SK-N-SH (cell line): ENCODE measurements at regions of chr4 and their contacts with region 1.

Region 1: DNA sequence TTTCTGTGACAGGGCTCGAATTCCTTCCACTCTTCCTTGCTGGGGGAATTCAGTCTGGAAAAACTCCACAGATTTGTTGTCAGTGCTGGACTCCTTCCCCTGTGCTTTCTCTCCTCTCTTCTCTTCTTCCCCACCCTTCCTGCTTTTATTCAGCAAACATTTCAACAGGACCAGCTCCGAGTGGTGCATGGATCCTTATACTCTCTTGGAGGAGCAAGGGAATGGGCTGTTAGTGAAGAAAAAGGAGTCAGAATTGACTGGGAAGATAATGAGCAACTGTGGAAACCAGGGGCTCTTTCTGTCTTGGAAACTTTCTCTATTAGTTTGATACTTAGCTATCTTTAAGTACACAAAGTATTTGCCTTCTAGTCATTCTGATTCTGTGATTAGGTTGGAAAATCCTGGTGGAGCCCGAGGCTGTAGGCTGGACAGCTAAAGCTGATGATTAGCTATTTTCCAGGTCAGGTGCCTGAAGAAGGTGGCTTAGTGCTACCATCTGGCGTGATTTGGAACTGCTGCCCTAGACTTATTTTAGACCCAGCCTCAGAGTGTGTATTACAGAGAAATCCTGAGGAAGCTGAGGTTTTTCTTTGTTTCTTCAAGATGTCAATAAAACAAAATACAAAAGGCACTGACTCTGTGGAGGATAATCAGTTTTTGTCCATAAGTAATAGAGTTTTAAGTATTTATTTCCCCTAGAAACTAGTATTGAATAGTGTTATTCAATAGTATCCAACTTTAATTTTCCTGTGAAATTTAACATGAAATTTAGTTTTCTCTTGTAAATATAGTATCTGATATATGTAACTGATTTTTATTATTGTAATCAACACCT is 38.4 kb downstream of the NAP1L5 start:
- DNase-seq: peak; percentile 45
- H3K4me3 ChIP-seq: no peak overlapping the region
- H3K27ac ChIP-seq: peak overlapping the region in 1 of 2 experiments; percentile 99; a peak in 2 of 4 replicates
- H3K4me1 ChIP-seq: peaks cover 2 to 19% of the 10 kb centered on the region in 2 experiments
- H3K27me3 ChIP-seq: no peaks in the 10 kb centered on the region
- CTCF ChIP-seq: peak; percentile 79
- EP300 ChIP-seq: no peak
- RAD21 ChIP-seq: peak; percentile 85

Region 2: DNA sequence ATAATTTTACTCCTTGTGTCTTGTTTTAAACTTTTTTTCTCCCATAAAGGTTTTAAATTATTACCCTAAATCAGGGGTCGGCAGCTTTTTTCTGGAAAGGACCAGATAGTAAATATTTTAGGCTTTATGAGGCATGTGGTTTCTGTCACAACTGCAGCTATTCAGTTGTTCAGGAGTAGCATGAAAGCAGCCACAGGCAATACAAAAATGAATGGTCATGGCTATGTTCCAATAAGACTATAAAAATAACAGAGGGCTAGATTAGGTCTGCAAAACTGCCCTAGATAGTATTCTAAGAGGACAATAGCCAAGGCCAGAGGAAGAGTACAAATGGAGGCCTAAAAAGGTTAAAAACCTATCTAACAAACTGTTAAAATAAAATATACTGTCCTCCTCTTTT is 177.7 kb before region 1 on chr4:
- CTCF ChIA-PET with region 1: no interaction called
- POLR2A ChIA-PET with region 1: no interaction called
- DNase-seq: peak; percentile 22
- H3K4me3 ChIP-seq: no peak overlapping the region
- H3K27ac ChIP-seq: no peak overlapping the region
- H3K4me1 ChIP-seq: no peaks in the 10 kb centered on the region
- H3K27me3 ChIP-seq: no peaks in the 10 kb centered on the region; the same call in 1 of the 2 replicates
- CTCF ChIP-seq: no peak
- EP300 ChIP-seq: peak in 1 of 2 experiments; percentile 48; a peak in 1 of 4 replicates
- RAD21 ChIP-seq: no peak

Region 3: DNA sequence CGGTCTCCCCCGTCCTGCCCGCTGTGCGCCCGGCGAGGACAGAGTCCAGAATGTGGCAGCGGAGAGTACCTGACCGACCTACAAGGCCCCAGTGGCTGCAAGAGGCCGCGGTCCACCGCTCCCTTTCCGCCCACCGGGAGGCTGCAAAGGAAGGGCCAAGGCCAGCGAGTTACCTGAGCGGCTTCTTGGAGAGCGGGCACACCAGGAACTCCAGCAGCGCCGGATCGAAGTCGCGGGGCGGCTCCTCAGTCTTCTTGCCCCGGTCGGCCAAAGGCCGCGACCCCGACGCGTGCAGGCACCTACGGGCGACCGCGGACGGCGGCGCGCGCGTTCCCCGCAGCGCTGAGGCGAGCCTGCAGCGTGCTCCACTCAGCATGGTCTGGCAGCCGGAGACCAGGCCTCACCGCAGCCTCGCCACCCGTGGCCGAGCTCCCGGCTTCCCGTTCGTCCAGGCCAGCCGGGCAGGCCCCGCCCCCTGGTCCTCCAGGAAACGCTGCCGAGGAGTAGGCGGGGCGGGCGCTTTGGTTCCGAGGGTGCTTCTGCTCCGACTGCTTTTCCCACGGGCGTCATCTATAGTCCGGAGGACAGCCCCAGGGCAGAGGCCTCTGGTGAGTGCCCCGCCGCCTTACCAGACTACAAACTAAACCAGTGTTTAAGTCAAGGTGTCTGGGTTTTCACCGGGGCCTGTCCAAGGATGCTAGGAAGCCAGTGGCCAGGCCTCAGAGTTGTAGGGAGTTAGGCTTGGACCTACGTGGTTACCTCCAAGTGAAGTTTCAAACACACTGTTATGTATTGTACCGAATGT is 135.7 kb before region 1 on chr4 and contains the start of gene PYURF:
- CTCF ChIA-PET with region 1: interaction called, 26 read pairs
- POLR2A ChIA-PET with region 1: interaction called, 3 read pairs
- DNase-seq: peak; percentile 93
- H3K4me3 ChIP-seq: peak within 1 kb of the TSS; percentile 92 to 95
- H3K27ac ChIP-seq: peak within 1 kb of the TSS; percentile 89 to 97
- H3K4me1 ChIP-seq: peaks cover 0 to 13% of the 10 kb centered on the region in 2 experiments; a peak in 2 of 4 replicates
- H3K27me3 ChIP-seq: no peaks in the 10 kb centered on the region
- CTCF ChIP-seq: no peak
- EP300 ChIP-seq: peak in 1 of 2 experiments; percentile 30; a peak in 1 of 4 replicates
- RAD21 ChIP-seq: no peak
- polyA plus RNA-seq, gene PYURF: 52.0 and 63.2 TPM in 2 replicates

Region 4: GRCh38 chr4:88528861-88529260 is 130.4 kb before region 1 on chr4:
- CTCF ChIA-PET with region 1: interaction called, 26 read pairs
- POLR2A ChIA-PET with region 1: interaction called, 3 read pairs
- DNase-seq: no peak
- H3K4me3 ChIP-seq: no peak overlapping the region
- H3K27ac ChIP-seq: 0 out of 4 replicates have a peak overlapping the region, but pooled peaks of 1 of the 2 experiments have one; percentile 15
- H3K4me1 ChIP-seq: peaks cover 9 to 11% of the 10 kb centered on the region in 2 experiments; a peak in 3 of 4 replicates
- H3K27me3 ChIP-seq: no peaks in the 10 kb centered on the region
- CTCF ChIP-seq: peak; percentile 47
- EP300 ChIP-seq: no peak
- RAD21 ChIP-seq: peak; percentile 35; the same call in 1 of the 2 replicates

Region 5: DNA sequence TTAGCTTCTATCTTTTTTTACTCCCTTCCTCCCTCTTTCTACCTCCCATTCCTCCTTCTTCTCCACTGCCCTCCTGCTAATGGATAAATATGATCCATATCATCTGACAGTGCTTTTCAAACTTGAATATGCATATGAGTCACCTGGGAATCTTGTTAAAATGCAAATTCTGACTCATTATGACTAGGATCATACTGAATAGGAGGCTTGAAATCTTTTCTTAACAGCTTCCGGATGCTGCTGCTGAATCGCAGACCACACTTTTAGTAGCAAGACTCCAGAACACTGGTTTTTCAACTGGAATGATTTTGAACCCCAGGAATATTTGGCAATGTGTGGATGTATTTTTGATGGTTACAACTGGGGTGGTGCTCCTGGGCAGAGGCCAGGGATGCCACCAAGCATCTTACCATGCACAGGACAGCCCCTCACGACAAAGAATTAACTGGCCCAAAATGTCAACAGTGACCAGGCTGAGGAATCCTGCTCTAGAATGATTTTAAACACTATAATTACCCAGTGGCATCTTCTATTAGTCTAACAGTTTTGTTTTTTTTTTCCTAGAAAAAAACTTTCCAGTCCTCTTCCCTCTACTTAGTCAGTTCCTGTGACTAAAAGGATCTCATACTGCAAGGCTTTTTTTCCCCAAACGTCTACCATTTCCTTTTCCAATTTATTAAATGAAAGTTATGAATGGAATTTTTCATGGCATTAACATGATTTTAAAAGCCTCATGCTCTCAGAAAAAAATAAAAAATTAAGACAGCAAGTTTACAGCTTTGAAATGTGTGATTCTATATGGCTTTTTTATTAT is 125.1 kb before region 1 on chr4:
- CTCF ChIA-PET with region 1: interaction called, 22 read pairs
- POLR2A ChIA-PET with region 1: no interaction called
- DNase-seq: no peak
- H3K4me3 ChIP-seq: peak overlapping the region; percentile 17 to 46; a peak in 2 of 4 replicates
- H3K27ac ChIP-seq: peak overlapping the region; percentile 62 to 100; a peak in 3 of 4 replicates
- H3K4me1 ChIP-seq: peaks cover 0 to 11% of the 10 kb centered on the region in 2 experiments; a peak in 2 of 4 replicates
- H3K27me3 ChIP-seq: no peaks in the 10 kb centered on the region
- CTCF ChIP-seq: no peak
- EP300 ChIP-seq: peak in 1 of 2 experiments; percentile 59; a peak in 2 of 4 replicates
- RAD21 ChIP-seq: no peak

Region 6: DNA sequence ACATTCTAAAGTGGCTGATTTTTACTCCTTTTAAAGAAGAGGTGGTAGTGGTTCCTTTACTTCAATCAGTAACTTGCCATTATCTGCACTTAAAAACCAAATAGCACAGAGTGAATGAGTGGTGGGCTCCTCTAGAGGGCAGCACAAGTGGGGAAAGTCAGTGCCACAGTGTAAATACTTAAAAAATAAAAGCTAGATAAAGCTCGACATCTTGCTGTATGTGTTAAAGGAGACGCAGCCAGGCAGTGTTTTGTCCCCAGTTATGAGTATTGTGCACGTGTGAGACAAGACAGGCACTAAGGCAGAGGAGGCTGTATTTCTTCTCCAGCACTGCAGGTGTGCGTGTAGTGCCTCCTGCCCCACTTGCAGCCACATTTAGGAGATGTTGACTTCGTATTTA is 13.7 kb after region 1 on chr4:
- CTCF ChIA-PET with region 1: interaction called, 16 read pairs
- POLR2A ChIA-PET with region 1: no interaction called
- DNase-seq: peak; percentile 17
- H3K4me3 ChIP-seq: peak overlapping the region in 1 of 2 experiments; percentile 31; a peak in 1 of 4 replicates
- H3K27ac ChIP-seq: no peak overlapping the region
- H3K4me1 ChIP-seq: no peaks in the 10 kb centered on the region; a peak in 2 of 4 replicates
- H3K27me3 ChIP-seq: no peaks in the 10 kb centered on the region
- CTCF ChIP-seq: peak; percentile 69
- EP300 ChIP-seq: no peak
- RAD21 ChIP-seq: peak; percentile 64

Region 7: GRCh38 chr4:88775529-88775928 is 116.3 kb after region 1 on chr4:
- CTCF ChIA-PET with region 1: no interaction called
- POLR2A ChIA-PET with region 1: no interaction called
- DNase-seq: no peak
- H3K4me3 ChIP-seq: no peak overlapping the region
- H3K27ac ChIP-seq: no peak overlapping the region
- H3K4me1 ChIP-seq: no peaks in the 10 kb centered on the region
- H3K27me3 ChIP-seq: no peaks in the 10 kb centered on the region
- CTCF ChIP-seq: no peak
- EP300 ChIP-seq: no peak
- RAD21 ChIP-seq: no peak

Region 8: GRCh38 chr4:88938135-88938534 is 278.9 kb after region 1 on chr4:
- CTCF ChIA-PET with region 1: no interaction called
- POLR2A ChIA-PET with region 1: no interaction called
- DNase-seq: no peak
- H3K4me3 ChIP-seq: no peak overlapping the region
- H3K27ac ChIP-seq: no peak overlapping the region
- H3K4me1 ChIP-seq: no peaks in the 10 kb centered on the region
- H3K27me3 ChIP-seq: no peaks in the 10 kb centered on the region
- CTCF ChIP-seq: no peak
- EP300 ChIP-seq: no peak
- RAD21 ChIP-seq: no peak

Region 9: GRCh38 chr4:89056953-89057398 is 397.7 kb after region 1 on chr4 and contains the start of gene FAM13A:
- CTCF ChIA-PET with region 1: no interaction called
- POLR2A ChIA-PET with region 1: no interaction called
- DNase-seq: no peak
- H3K4me3 ChIP-seq: peak within 1 kb of the TSS in 1 of 2 experiments; percentile 12; a peak in 1 of 4 replicates
- H3K27ac ChIP-seq: no peak within 1 kb of the TSS
- H3K4me1 ChIP-seq: no peaks in the 10 kb centered on the region
- H3K27me3 ChIP-seq: no peaks in the 10 kb centered on the region
- CTCF ChIP-seq: no peak
- EP300 ChIP-seq: no peak
- RAD21 ChIP-seq: no peak
- polyA plus RNA-seq, gene FAM13A: 0.67 and 1.1 TPM in 2 replicates